ENCODE measurements at regions of chr16 and their contacts with region 1.

Region 1: DNA sequence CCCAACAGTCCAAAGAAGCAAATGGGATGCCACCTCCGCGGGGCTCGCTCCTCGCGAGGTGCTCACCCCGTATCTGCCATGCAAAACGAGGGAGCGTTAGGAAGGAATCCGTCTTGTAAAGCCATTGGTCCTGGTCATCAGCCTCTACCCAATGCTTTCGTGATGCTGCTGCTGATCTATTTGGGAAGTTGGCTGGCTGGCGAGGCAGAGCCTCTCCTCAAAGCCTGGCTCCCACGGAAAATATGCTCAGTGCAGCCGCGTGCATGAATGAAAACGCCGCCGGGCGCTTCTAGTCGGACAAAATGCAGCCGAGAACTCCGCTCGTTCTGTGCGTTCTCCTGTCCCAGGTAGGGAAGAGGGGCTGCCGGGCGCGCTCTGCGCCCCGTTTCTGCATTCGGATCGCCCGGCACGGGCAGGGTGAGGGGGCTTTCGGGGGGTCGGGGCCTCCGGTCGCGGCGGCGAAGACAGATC is at the start of gene CDH13:
- DNase-seq: peak; percentile 62
- H3K4me3 ChIP-seq: peak within 1 kb of the TSS; percentile 52 to 82 (median 66)
- H3K27ac ChIP-seq: peak within 1 kb of the TSS; percentile 96
- H3K4me1 ChIP-seq: peaks cover 46% of the 10 kb centered on the region
- H3K27me3 ChIP-seq: peaks cover 0 to 2% of the 10 kb centered on the region in 2 experiments
- CTCF ChIP-seq: no peak
- POLR2A ChIP-seq: no peak
- total RNA-seq, gene CDH13: 98.5 and 124 TPM in 2 replicates

Region 2: DNA sequence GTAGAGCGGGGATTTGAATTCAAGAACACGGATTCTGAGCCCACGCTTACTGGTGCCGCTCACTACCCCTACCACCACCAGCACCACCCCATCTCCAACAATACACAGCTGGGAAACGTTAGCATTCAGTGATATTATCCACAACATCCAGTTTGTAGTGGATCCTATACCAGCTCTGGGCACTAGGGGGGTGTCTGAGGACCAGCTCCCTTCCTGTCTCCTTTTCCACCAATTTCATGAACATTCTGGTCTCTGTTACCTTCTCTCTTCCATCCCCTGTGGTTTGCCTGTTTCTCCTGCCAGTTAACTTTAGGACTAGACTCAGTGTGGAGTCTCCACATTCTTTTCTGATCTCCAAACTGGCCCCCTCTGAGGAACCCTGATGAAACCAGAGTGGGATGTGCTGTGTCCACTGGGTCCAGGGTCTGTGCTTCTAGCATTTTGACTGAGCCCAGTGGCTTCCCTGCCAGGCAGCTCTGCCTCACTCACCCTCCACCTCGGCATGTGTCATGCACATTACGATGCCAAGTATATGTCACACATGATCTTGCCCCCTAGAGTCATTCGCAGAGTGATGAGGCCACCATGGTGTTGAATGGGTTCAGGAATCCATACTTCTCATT is 187.0 kb before region 1 on chr16:
- CTCF ChIA-PET with region 1: no interaction called
- POLR2A ChIA-PET with region 1: no interaction called
- dilution Hi-C with region 1: no loop called
- intact Hi-C with region 1: no loop called
- DNase-seq: peak; percentile 6
- H3K4me3 ChIP-seq: no peak overlapping the region
- H3K27ac ChIP-seq: no peak overlapping the region
- H3K4me1 ChIP-seq: no peaks in the 10 kb centered on the region
- H3K27me3 ChIP-seq: peaks cover 7 to 10% of the 10 kb centered on the region in 2 experiments
- CTCF ChIP-seq: peak; percentile 30 to 66
- POLR2A ChIP-seq: no peak

Region 3: GRCh38 chr16:82603784-82604411 is 22.9 kb before region 1 on chr16:
- CTCF ChIA-PET with region 1: interaction called, 11 read pairs
- POLR2A ChIA-PET with region 1: interaction called, 3 read pairs
- dilution Hi-C with region 1: no loop called
- intact Hi-C with region 1: no loop called
- DNase-seq: peak; percentile 68
- H3K4me3 ChIP-seq: no peak overlapping the region
- H3K27ac ChIP-seq: no peak overlapping the region
- H3K4me1 ChIP-seq: no peaks in the 10 kb centered on the region
- H3K27me3 ChIP-seq: peaks cover 2 to 4% of the 10 kb centered on the region in 2 experiments
- CTCF ChIP-seq: peak; percentile 61 to 80
- POLR2A ChIP-seq: no peak

Region 4: GRCh38 chr16:82653550-82654511 is 27.0 kb after region 1 on chr16:
- CTCF ChIA-PET with region 1: interaction called, 13 read pairs
- POLR2A ChIA-PET with region 1: interaction called, 5 read pairs
- dilution Hi-C with region 1: no loop called
- intact Hi-C with region 1: no loop called
- DNase-seq: peak; percentile 84
- H3K4me3 ChIP-seq: peak overlapping the region in 1 of 3 experiments; percentile 7
- H3K27ac ChIP-seq: peak overlapping the region; percentile 91
- H3K4me1 ChIP-seq: peaks cover 65% of the 10 kb centered on the region
- H3K27me3 ChIP-seq: no peaks in the 10 kb centered on the region
- CTCF ChIP-seq: no peak
- POLR2A ChIP-seq: no peak